ENCODE measurements at regions of chr1 and their contacts with region 1.

Region 1: GRCh38 chr1:209827384-209828262 is at the start of gene UTP25:
- DNase-seq: peak; percentile 85
- ATAC-seq: peak; percentile 91
- H3K4me3 Mint-ChIP-seq: peak within 1 kb of the TSS; percentile 97
- H3K27ac Mint-ChIP-seq: peak within 1 kb of the TSS; percentile 92
- H3K4me1 Mint-ChIP-seq: peaks cover 33% of the 10 kb centered on the region
- H3K27me3 Mint-ChIP-seq: peaks cover 7% of the 10 kb centered on the region
- CTCF ChIP-seq: no peak
- total RNA-seq, gene UTP25: 13.3 and 15.4 TPM in 2 replicates

Region 2: DNA sequence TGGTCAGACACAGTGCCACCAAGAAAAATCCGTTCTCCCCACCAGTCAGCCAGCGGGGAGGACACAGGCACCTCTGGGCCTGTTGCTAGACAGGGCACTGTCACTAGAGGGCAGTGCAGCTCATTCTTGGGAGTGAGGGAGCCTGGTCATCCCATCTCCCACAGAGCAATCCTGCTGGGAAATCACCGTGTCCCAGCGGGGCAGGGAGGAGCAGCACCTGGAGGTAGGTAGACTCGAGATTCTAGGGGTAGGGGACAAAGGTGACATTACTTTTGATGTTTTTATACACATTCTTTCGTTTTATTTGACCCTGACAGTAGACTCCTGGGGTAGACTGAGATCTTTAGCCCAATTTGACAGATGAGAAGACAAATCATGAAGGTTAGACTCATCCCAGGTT is 250.8 kb before region 1 on chr1:
- CTCF ChIA-PET with region 1: interaction called, 6 read pairs
- POLR2A ChIA-PET with region 1: no interaction called
- intact Hi-C with region 1: loop called (anchors 10 kb)
- DNase-seq: peak; percentile 49
- ATAC-seq: peak; percentile 79
- H3K4me3 Mint-ChIP-seq: no peak overlapping the region
- H3K27ac Mint-ChIP-seq: no peak overlapping the region
- H3K4me1 Mint-ChIP-seq: no peaks in the 10 kb centered on the region
- H3K27me3 Mint-ChIP-seq: peaks cover 16% of the 10 kb centered on the region
- CTCF ChIP-seq: peak; percentile 54

Region 3: GRCh38 chr1:209769171-209769904 is 58.3 kb before region 1 on chr1:
- CTCF ChIA-PET with region 1: interaction called, 14 read pairs
- POLR2A ChIA-PET with region 1: interaction called, 8 read pairs
- intact Hi-C with region 1: no loop called
- DNase-seq: no peak
- ATAC-seq: peak; percentile 43
- H3K4me3 Mint-ChIP-seq: no peak overlapping the region
- H3K27ac Mint-ChIP-seq: no peak overlapping the region
- H3K4me1 Mint-ChIP-seq: peaks cover 16% of the 10 kb centered on the region
- H3K27me3 Mint-ChIP-seq: no peaks in the 10 kb centered on the region
- CTCF ChIP-seq: no peak

Region 4: DNA sequence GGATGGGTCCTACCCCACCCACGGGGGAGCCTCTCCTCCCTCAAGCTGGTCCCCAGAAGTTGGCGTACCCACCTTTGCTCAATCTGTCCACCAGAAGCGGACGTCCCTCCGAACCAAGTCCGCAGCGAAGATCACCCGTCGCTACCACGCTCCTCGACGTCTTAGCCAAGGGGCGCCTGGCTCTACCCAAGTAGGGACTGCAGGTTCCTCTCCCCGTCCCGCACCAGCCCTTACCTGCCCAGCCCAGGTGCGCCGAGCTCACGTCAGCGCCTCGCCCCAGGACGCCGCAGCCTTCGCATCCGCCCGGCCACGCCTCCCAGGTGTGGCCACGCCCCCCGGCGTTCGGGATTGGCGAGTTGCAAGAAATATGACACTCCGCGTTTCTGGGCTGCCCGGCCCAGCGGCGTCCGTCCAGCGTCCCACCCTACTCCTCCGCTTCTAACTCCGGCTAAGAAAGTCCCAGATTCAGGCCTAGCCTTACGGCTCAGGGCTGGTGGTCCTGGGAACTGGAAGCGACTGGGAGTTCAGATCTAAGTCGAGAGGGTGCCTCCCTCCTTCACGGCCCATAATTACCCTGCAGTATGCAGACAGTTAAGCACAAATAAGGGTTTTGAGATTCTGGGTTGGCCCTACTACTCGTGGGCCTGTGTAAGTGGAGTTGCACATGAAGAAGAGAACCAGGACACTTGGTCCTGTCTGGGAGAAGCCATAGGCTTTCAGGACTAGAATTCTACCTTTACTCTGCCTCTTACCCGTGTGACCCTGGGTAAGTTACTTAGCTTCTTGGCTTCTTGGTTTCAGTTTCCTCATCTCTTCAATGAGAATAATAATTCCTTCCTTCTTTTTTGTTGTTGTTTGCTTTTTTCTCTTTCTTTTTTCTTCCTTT is 21.5 kb before region 1 on chr1 and contains the start of gene IRF6:
- CTCF ChIA-PET with region 1: interaction called, 11 read pairs
- POLR2A ChIA-PET with region 1: no interaction called
- intact Hi-C with region 1: loop called (anchors 1 kb)
- DNase-seq: peak; percentile 69
- ATAC-seq: peak; percentile 94
- H3K4me3 Mint-ChIP-seq: peak within 1 kb of the TSS; percentile 96
- H3K27ac Mint-ChIP-seq: peak within 1 kb of the TSS; percentile 81
- H3K4me1 Mint-ChIP-seq: peaks cover 7% of the 10 kb centered on the region
- H3K27me3 Mint-ChIP-seq: peaks cover 21% of the 10 kb centered on the region
- CTCF ChIP-seq: no peak
- total RNA-seq, gene IRF6: 0.42 and 0.81 TPM in 2 replicates

Region 5: DNA sequence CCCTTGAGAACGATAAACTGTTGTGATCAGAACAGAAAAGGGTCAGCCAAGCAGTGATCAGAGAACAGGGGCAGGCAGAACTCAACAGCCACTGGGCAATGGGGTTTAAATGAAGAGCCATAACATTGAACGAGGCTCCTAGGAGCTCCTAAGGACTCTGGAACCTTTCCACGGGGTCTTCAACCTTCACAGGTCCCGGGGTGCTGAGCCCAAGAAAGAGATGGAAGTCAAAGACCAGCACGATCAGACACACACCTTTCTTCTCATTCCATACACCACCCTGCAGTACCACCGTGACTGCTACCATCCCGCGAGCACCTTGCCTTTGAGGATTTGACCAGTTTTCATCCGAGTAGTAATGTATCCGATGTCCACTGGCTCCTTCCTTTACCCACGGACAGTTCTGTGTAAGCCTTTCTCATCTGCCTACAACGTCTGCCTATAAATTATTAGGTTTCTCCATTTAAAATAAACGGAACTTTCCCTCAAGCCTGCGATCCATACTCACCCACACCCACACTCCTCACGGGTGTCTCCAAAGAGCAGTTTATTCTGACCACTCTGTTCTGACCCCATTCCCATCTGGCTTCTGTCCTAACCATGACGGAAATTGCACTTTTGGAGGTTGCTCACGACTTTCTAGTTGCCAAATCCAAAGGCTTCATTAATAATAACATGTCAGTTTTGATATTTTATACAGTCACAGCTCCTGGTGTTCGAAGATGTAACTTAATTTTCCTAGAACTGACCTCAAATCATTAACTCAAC is 484.3 kb after region 1 on chr1:
- CTCF ChIA-PET with region 1: no interaction called
- POLR2A ChIA-PET with region 1: no interaction called
- intact Hi-C with region 1: loop called (anchors 1 kb)
- DNase-seq: no peak
- ATAC-seq: no peak
- H3K4me3 Mint-ChIP-seq: peak overlapping the region; percentile 83
- H3K27ac Mint-ChIP-seq: no peak overlapping the region
- H3K4me1 Mint-ChIP-seq: peaks cover 4% of the 10 kb centered on the region
- H3K27me3 Mint-ChIP-seq: peaks cover 18% of the 10 kb centered on the region
- CTCF ChIP-seq: no peak

Region 6: DNA sequence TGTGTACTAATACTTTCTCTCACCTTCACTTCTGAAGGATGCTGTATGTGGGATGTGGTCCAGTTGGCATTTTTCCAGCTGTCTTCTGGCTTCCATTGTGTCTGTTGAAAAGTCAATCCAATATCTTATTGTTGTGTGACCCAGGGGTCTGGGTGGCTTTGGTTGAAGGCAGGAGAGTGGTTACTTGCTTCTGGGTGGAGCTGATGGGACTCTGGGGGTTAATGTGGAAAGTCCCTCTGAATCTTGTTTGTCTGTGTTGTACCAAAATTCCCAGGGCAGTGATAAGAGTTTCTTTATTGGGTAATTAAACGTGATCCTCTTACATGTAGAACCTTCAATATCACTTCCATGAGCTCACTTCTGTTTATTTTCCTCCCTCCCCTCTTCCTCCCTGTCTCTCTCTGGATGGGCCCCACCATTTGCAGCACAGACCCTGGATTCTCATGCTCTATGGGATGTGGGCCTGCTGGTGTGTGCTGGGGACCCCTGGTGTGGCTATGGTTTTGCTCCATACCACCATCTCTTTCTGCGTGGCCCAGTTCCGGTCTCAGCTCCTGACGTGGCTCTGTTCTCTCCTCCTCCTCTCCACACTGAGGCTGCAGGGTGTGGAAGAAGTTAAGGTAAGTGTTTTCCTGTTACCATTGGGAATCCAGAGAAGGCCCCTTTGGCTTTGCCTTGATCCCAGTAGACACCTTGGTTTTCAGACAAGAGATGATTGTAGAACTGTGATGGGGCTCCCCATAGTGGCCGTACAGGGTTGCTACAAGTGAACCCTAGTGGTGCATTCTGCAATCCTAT is 572.6 kb after region 1 on chr1:
- CTCF ChIA-PET with region 1: no interaction called
- POLR2A ChIA-PET with region 1: no interaction called
- intact Hi-C with region 1: loop called (anchors 1 kb)
- DNase-seq: peak; percentile 31
- ATAC-seq: peak; percentile 91
- H3K4me3 Mint-ChIP-seq: peak overlapping the region; percentile 5
- H3K27ac Mint-ChIP-seq: peak overlapping the region; percentile 9
- H3K4me1 Mint-ChIP-seq: peaks cover 9% of the 10 kb centered on the region
- H3K27me3 Mint-ChIP-seq: no peaks in the 10 kb centered on the region
- CTCF ChIP-seq: no peak